ENCODE measurements at regions of chr16 and their contacts with region 1.

Region 1: GRCh38 chr16:25051406-25052150 is 36.4 kb upstream of the ARHGAP17 start:
- DNase-seq: peak in 1 of 5 donors; percentile 34
- H3K4me3 ChIP-seq: peak overlapping the region in 1 of 2 donors; percentile 4
- H3K4me3 Mint-ChIP-seq: peak overlapping the region; percentile 48 to 91 (median 74)
- H3K27ac ChIP-seq: peak overlapping the region; percentile 37
- H3K27ac Mint-ChIP-seq: peak overlapping the region; percentile 77 to 98 (median 88)
- H3K4me1 ChIP-seq: peaks cover 49% of the 10 kb centered on the region
- H3K4me1 Mint-ChIP-seq: peaks cover 37 to 61% (median 47%) of the 10 kb centered on the region in 4 donors
- H3K27me3 ChIP-seq: no peaks in the 10 kb centered on the region
- H3K27me3 Mint-ChIP-seq: no peaks in the 10 kb centered on the region

Region 2: DNA sequence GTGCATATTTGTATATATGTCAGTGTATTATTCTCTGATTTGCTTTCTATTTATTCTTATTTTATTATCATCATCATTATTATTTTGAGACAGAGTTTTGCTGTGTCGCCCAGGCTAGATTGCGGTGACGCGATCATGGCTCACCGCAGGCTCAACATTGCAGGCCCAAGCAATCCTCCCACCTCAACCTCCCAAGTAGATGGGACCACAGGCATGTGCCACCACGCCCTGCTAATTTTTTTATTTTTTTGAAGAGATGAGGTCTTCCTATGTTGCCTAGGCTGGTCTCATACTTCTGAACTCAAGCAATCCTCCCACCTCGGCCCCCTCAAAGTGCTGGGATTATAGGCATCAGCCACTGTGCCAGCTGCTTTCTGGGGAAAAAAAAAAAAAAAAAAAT is 28.0 kb before region 1 on chr16:
- CTCF ChIA-PET with region 1: interaction called, 4 read pairs
- POLR2A ChIA-PET with region 1: interaction called, 123 read pairs
- intact Hi-C with region 1: no loop called
- DNase-seq: no peak
- H3K4me3 ChIP-seq: no peak overlapping the region
- H3K4me3 Mint-ChIP-seq: no peak overlapping the region
- H3K27ac ChIP-seq: no peak overlapping the region
- H3K27ac Mint-ChIP-seq: no peak overlapping the region
- H3K4me1 ChIP-seq: peaks cover 20% of the 10 kb centered on the region
- H3K4me1 Mint-ChIP-seq: peaks cover 18 to 24% (median 20%) of the 10 kb centered on the region in 4 donors
- H3K27me3 ChIP-seq: no peaks in the 10 kb centered on the region
- H3K27me3 Mint-ChIP-seq: no peaks in the 10 kb centered on the region

Region 3: DNA sequence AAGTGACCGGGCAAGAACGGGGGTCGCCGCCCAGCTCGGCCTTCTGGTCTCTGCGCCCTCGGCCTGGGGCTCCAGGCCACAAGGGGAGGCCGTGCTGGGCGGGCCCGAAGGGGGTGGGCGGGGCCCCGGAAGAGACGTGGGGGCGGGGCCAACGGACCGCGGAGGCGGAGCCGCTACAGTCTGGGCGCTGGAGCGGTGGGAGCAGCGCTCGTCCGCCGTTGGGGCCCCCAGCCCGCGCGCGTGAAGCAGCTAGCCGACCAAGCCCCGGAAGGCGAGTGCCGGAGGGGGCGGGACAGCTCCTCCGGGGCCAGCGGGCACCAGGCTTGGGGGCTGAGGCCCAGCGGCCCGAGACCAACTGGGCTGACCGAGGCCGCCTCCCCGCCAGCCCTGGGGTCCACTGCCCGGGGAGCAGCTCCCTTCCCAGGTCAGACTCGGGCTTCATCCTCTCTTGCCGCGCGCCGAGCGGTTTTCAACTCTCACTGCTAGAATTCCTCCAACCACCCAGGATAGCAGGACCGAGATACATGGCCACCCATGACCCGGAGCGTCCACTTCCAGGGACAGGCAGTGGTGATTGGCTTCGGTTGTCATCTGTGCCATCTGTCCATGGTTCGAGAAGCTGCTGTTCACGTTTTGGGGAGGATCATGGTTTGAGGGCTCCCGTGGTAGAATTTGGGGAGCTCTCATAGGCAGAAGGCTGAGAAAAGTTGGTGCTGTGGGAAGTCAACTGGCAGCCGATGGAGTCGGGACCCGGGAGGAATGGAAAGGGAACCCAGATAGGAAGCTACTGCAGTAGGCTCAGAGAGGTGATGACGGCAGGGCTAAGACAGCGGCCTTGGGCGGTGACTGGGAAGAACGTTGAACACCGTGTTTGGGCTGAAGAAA is 15.4 kb after region 1 on chr16:
- CTCF ChIA-PET with region 1: interaction called, 5 read pairs
- POLR2A ChIA-PET with region 1: interaction called, 90 read pairs
- intact Hi-C with region 1: no loop called
- DNase-seq: peak; percentile 78 to 84 (median 79)
- H3K4me3 ChIP-seq: peak overlapping the region; percentile 70 to 73
- H3K4me3 Mint-ChIP-seq: peak overlapping the region; percentile 87 to 95 (median 92)
- H3K27ac ChIP-seq: peak overlapping the region; percentile 73
- H3K27ac Mint-ChIP-seq: peak overlapping the region; percentile 88 to 98 (median 94)
- H3K4me1 ChIP-seq: peaks cover 42% of the 10 kb centered on the region
- H3K4me1 Mint-ChIP-seq: peaks cover 25 to 41% (median 33%) of the 10 kb centered on the region in 4 donors
- H3K27me3 ChIP-seq: no peaks in the 10 kb centered on the region
- H3K27me3 Mint-ChIP-seq: no peaks in the 10 kb centered on the region

Region 4: DNA sequence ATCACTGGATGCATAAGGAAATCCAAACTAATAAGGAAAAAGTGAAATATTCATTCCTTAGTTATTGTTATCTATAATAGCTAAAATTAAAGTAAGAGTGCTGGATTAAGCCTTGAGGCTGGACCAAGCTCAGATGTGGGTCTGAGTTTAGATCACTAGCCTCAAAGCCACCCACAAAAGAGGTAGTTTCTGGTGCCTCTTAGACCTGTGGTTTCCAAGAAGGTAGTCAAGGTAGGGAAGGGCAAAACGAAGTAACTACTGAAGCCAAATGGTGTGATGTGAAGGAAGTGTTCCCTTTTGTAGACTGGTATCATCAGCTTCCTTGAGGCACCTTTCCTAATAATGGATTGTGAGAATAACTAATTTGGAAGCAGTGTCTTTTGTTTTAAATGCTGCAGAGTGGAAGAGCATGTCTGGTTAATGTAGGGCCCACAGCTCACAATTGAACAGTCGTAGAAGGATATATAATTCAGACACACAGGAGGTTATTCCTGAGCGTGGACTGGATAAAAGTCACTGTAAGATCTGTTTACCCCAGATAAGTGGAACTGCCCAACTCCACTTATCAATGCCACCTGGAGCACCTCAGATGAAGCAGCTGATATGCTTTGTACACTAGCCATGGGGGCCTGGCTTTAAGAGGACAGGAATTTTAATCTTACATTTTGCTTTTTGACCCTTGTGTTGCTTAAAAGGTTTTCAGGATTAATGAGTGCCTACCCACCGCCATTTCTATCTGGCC is 28.2 kb after region 1 on chr16:
- CTCF ChIA-PET with region 1: no interaction called
- POLR2A ChIA-PET with region 1: no interaction called
- intact Hi-C with region 1: no loop called
- DNase-seq: no peak
- H3K4me3 ChIP-seq: no peak overlapping the region
- H3K4me3 Mint-ChIP-seq: no peak overlapping the region
- H3K27ac ChIP-seq: no peak overlapping the region
- H3K27ac Mint-ChIP-seq: no peak overlapping the region
- H3K4me1 ChIP-seq: no peaks in the 10 kb centered on the region
- H3K4me1 Mint-ChIP-seq: no peaks in the 10 kb centered on the region
- H3K27me3 ChIP-seq: no peaks in the 10 kb centered on the region
- H3K27me3 Mint-ChIP-seq: no peaks in the 10 kb centered on the region

Region 5: GRCh38 chr16:25126820-25127232 is 75.2 kb after region 1 on chr16:
- CTCF ChIA-PET with region 1: interaction called, 6 read pairs
- POLR2A ChIA-PET with region 1: no interaction called
- intact Hi-C with region 1: loop called (anchors 1 kb)
- DNase-seq: peak in 4 of 5 donors; percentile 12 to 28 (median 23)
- H3K4me3 ChIP-seq: no peak overlapping the region
- H3K4me3 Mint-ChIP-seq: no peak overlapping the region
- H3K27ac ChIP-seq: no peak overlapping the region
- H3K27ac Mint-ChIP-seq: peak overlapping the region in 6 of 7 donors; percentile 19 to 79 (median 56)
- H3K4me1 ChIP-seq: peaks cover 17% of the 10 kb centered on the region
- H3K4me1 Mint-ChIP-seq: peaks cover 21 to 52% (median 32%) of the 10 kb centered on the region in 4 donors
- H3K27me3 ChIP-seq: no peaks in the 10 kb centered on the region
- H3K27me3 Mint-ChIP-seq: no peaks in the 10 kb centered on the region

Measured in CD4-positive, alpha-beta memory T cell (primary cell).